OCI-LY7 (cell line): ENCODE measurements at regions of chrX and their contacts with region 1.

Region 1: GRCh38 chrX:136954930-136955329 is 74.4 kb upstream of the RBMX start:
- DNase-seq: peak; percentile 17
- H3K4me3 ChIP-seq: no peak overlapping the region
- H3K27ac ChIP-seq: no peak overlapping the region
- H3K4me1 ChIP-seq: no peaks in the 10 kb centered on the region
- CTCF ChIP-seq: peak; percentile 74

Region 2: GRCh38 chrX:137051978-137052642 is 97.2 kb after region 1 on chrX:
- CTCF ChIA-PET with region 1: no interaction called
- POLR2A ChIA-PET with region 1: no interaction called
- intact Hi-C with region 1: loop called (anchors 1 kb)
- DNase-seq: peak; percentile 71
- H3K4me3 ChIP-seq: peak overlapping the region; percentile 65
- H3K27ac ChIP-seq: no peak overlapping the region
- H3K4me1 ChIP-seq: no peaks in the 10 kb centered on the region
- CTCF ChIP-seq: peak; percentile 79